Colonic mucosa (tissue), 4 donors: ENCODE measurements at regions of chr15 and their contacts with region 1.

Region 1: DNA sequence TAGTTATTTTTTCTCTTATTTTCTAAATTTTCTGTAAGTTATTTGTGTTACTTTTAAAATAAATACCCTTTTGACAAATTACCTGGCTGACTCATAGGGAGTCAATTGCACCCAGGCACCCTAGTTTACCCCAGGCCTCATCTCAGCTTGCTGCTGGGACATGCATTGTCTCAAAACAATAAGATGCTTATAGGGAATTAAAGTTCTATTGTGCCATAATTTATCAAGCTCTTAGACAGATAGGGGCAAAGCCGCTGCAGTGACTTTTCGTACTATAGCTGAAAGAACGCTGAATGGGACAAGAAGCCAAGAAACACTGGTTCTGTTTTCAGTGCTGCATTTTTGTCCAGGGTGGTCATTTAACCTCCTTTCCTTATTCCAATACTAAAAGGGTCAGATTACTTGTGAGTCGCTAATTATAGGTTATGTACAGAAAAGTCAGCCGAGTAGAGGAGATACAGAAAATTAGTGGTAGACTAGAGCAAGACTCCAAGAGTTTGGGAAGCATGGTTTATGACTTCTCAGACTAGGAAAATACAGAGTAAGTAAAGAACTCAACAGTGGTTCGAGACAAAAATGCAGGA is 50.3 kb downstream of the EXD1 start:
- DNase-seq: no peak
- H3K4me3 ChIP-seq: no peak overlapping the region
- H3K27ac ChIP-seq: no peak overlapping the region
- H3K4me1 ChIP-seq: no peaks in the 10 kb centered on the region
- H3K27me3 ChIP-seq: no peaks in the 10 kb centered on the region
- CTCF ChIP-seq: no peak

Region 2: DNA sequence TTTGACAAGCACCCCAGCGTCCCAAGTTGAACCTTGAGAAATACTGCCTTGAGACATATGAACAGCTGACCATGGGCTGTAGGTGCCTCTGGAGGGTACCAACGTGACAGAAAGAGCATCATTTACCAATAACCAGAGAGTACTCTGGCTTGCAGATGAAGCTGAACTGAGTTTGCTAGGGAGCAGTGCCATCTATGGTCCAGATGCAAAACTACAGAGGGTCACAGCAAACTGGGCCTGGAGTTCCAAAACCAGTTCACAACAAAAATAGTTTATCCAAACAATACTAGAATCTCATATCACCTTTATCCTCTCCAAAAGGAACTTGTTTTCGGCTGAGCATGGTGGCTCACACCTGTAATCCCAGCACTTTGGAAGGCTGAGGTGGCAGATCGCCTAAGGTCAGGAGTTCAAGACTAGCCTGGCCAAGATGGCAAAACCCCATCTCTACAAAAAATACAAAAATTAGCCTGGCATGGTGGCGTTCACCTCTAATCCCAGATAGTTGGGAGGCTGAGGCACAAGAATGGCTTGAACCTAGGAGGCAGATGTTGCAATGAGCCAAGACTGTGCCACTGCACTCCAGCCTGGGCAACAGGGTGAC is 157.7 kb before region 1 on chr15:
- intact Hi-C with region 1: loop called (anchors 10 kb)
- DNase-seq: peak; percentile 43
- H3K4me3 ChIP-seq: no peak overlapping the region
- H3K27ac ChIP-seq: no peak overlapping the region
- H3K4me1 ChIP-seq: no peaks in the 10 kb centered on the region
- H3K27me3 ChIP-seq: no peaks in the 10 kb centered on the region
- CTCF ChIP-seq: peak; percentile 60

Region 3: DNA sequence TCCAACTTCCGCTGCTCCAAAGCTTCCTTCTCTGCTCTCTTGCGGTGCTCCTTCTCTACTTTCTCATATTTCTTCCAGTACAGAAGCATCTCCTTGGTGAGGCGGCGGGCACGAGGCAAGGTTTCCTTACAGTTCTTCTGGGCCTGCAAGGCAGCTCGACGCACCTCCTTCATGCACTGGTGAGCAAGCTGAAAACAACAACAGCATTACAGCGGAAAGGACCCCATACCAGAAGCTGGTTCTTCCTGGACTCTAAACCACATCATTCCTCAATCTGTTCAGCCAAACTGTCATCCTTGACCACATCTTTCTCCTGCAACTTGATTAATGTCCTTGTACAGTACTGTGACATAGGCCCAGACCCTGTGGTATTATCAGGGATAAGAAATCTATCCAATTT is 100.6 kb before region 1 on chr15:
- intact Hi-C with region 1: loop called (anchors 10 kb)
- DNase-seq: no peak
- H3K4me3 ChIP-seq: no peak overlapping the region
- H3K27ac ChIP-seq: no peak overlapping the region
- H3K4me1 ChIP-seq: no peaks in the 10 kb centered on the region
- H3K27me3 ChIP-seq: no peaks in the 10 kb centered on the region
- CTCF ChIP-seq: no peak

Region 4: GRCh38 chr15:41215708-41216107 is 35.4 kb after region 1 on chr15:
- intact Hi-C with region 1: no loop called
- DNase-seq: no peak
- H3K4me3 ChIP-seq: no peak overlapping the region
- H3K27ac ChIP-seq: no peak overlapping the region
- H3K4me1 ChIP-seq: no peaks in the 10 kb centered on the region
- H3K27me3 ChIP-seq: no peaks in the 10 kb centered on the region
- CTCF ChIP-seq: no peak